ENCODE measurements at regions of chr5 and their contacts with region 1.

Region 1: DNA sequence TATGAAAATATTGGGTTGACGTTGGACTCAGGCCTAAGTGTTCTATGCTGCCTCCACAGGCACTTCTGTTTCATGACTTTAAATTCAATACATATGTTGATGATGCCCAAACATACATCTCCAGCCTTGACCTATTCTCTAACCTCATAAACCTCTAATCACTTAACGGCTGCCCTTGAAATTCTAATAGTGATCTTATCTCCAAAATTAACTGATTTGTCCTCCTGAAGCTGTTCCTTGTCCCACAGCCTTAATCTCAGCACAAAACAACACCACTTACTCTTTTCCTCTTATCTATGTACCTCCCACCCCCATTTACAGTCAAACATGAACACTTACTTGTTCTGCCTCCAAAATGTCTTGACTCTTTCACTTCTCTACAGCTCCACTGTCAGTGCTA is 43.3 kb downstream of the FGF10 start:
- DNase-seq: no peak
- H3K4me3 ChIP-seq: no peak overlapping the region
- H3K27ac ChIP-seq: no peak overlapping the region
- H3K4me1 ChIP-seq: no peaks in the 10 kb centered on the region
- H3K27me3 ChIP-seq: no peaks in the 10 kb centered on the region
- CTCF ChIP-seq: no peak
- EP300 ChIP-seq: no peak
- POLR2A ChIP-seq: no peak

Region 2: GRCh38 chr5:42854807-42855206 is 1491.1 kb before region 1 on chr5:
- intact Hi-C with region 1: no loop called
- DNase-seq: no peak
- H3K4me3 ChIP-seq: no peak overlapping the region
- H3K27ac ChIP-seq: no peak overlapping the region
- H3K4me1 ChIP-seq: peaks cover 4% of the 10 kb centered on the region
- H3K27me3 ChIP-seq: no peaks in the 10 kb centered on the region
- CTCF ChIP-seq: no peak
- EP300 ChIP-seq: no peak
- POLR2A ChIP-seq: no peak

Region 3: GRCh38 chr5:44382894-44383293 is 37.0 kb after region 1 on chr5:
- intact Hi-C with region 1: loop called in 1 of 4 experiments (anchors 1 kb)
- DNase-seq: no peak
- H3K4me3 ChIP-seq: no peak overlapping the region
- H3K27ac ChIP-seq: no peak overlapping the region
- H3K4me1 ChIP-seq: no peaks in the 10 kb centered on the region
- H3K27me3 ChIP-seq: no peaks in the 10 kb centered on the region
- CTCF ChIP-seq: no peak
- EP300 ChIP-seq: no peak
- POLR2A ChIP-seq: no peak

Measured in ovary (tissue), 10 donors.